ENCODE measurements at regions of chr21 and their contacts with region 1.

Region 1: GRCh38 chr21:37267269-37268184 is at the start of gene VPS26C:
- DNase-seq: peak; percentile 100
- ATAC-seq: peak; percentile 86
- H3K4me3 ChIP-seq: peak within 1 kb of the TSS; percentile 66 to 99 (median 99)
- H3K4me3 Mint-ChIP-seq: peak within 1 kb of the TSS; percentile 96
- H3K27ac ChIP-seq: peak within 1 kb of the TSS; percentile 99
- H3K27ac Mint-ChIP-seq: peak within 1 kb of the TSS; percentile 99
- H3K4me1 ChIP-seq: peaks cover 14% of the 10 kb centered on the region in 2 donors
- H3K4me1 Mint-ChIP-seq: peaks cover 35% of the 10 kb centered on the region
- H3K27me3 ChIP-seq: peaks cover 0 to 3% (median 0%) of the 10 kb centered on the region in 4 experiments
- H3K27me3 Mint-ChIP-seq: no peaks in the 10 kb centered on the region
- CTCF ChIP-seq: no peak
- total RNA-seq, gene VPS26C: 58.6 and 59.6 TPM in 2 replicates

Region 2: GRCh38 chr21:36966066-36966820 is 301.3 kb before region 1 on chr21 and contains the start of gene HLCS:
- CTCF ChIA-PET with region 1: no interaction called
- POLR2A ChIA-PET with region 1: no interaction called
- intact Hi-C with region 1: loop called (anchors 2 kb)
- DNase-seq: peak; percentile 87
- ATAC-seq: peak; percentile 90
- H3K4me3 ChIP-seq: peak within 1 kb of the TSS in 4 of 5 experiments; percentile 43 to 73 (median 69)
- H3K4me3 Mint-ChIP-seq: peak within 1 kb of the TSS; percentile 92
- H3K27ac ChIP-seq: peak within 1 kb of the TSS; percentile 39 to 81
- H3K27ac Mint-ChIP-seq: peak within 1 kb of the TSS; percentile 89
- H3K4me1 ChIP-seq: peaks cover 13 to 16% of the 10 kb centered on the region in 2 donors
- H3K4me1 Mint-ChIP-seq: peaks cover 15% of the 10 kb centered on the region
- H3K27me3 ChIP-seq: no peaks in the 10 kb centered on the region
- H3K27me3 Mint-ChIP-seq: no peaks in the 10 kb centered on the region
- CTCF ChIP-seq: peak; percentile 22
- total RNA-seq, gene HLCS: 14.7 and 16.2 TPM in 2 replicates

Region 3: GRCh38 chr21:37072988-37073416 is 194.5 kb before region 1 on chr21 and contains the starts of genes PIGP and TTC3:
- CTCF ChIA-PET with region 1: no interaction called
- POLR2A ChIA-PET with region 1: no interaction called
- intact Hi-C with region 1: loop called (anchors 1 kb)
- DNase-seq: peak; percentile 98
- ATAC-seq: peak; percentile 67
- H3K4me3 ChIP-seq: peak within 1 kb of the TSS; percentile 80 to 92 (median 86)
- H3K4me3 Mint-ChIP-seq: peak within 1 kb of the TSS; percentile 98
- H3K27ac ChIP-seq: peak within 1 kb of the TSS; percentile 98
- H3K27ac Mint-ChIP-seq: peak within 1 kb of the TSS; percentile 99
- H3K4me1 ChIP-seq: peaks cover 22 to 23% of the 10 kb centered on the region in 2 donors
- H3K4me1 Mint-ChIP-seq: peaks cover 46% of the 10 kb centered on the region
- H3K27me3 ChIP-seq: no peaks in the 10 kb centered on the region
- H3K27me3 Mint-ChIP-seq: no peaks in the 10 kb centered on the region
- CTCF ChIP-seq: no peak
- total RNA-seq, gene PIGP: 21.7 and 22.7 TPM in 2 replicates
- total RNA-seq, gene TTC3: 163 and 191 TPM in 2 replicates

Region 4: DNA sequence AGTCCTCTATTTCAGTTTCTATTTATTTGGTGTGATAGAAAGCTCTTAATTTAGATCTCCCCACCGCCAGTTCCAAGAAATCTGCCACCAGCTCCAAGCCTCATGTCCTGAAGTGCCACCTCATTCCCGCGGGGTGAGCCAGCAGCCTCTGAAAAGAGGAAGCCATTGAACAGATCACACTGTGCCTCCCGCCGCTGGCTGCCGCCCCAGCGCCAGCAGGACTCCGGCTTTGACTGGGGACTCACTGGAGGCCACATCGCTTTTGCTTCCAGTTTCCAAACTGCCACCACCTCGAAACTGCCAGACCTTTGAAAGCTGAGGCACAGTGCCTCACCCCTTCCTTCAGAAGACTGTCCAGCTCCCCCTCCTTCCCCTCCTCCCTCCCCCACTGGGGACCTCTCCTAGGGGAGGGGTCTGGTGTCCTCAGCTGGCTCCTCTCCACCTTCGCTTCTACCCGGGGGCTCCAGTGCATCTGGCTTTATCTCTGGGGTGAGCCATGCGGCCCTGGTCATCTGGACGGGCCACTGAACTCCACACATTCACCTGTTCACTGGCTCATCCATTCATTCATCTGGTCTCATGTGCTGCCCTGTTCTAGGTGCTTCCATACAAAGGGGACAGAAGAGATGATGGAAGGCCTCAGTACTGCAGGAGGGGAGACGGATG is 59.3 kb before region 1 on chr21:
- CTCF ChIA-PET with region 1: no interaction called
- POLR2A ChIA-PET with region 1: interaction called, 3 read pairs
- intact Hi-C with region 1: loop called (anchors 1 kb)
- DNase-seq: peak; percentile 80
- ATAC-seq: peak; percentile 65
- H3K4me3 ChIP-seq: peak overlapping the region in 4 of 5 experiments; percentile 12 to 68 (median 34)
- H3K4me3 Mint-ChIP-seq: peak overlapping the region; percentile 76
- H3K27ac ChIP-seq: peak overlapping the region; percentile 54 to 79
- H3K27ac Mint-ChIP-seq: peak overlapping the region; percentile 78
- H3K4me1 ChIP-seq: peaks cover 27 to 34% of the 10 kb centered on the region in 2 donors
- H3K4me1 Mint-ChIP-seq: peaks cover 40% of the 10 kb centered on the region
- H3K27me3 ChIP-seq: no peaks in the 10 kb centered on the region
- H3K27me3 Mint-ChIP-seq: no peaks in the 10 kb centered on the region
- CTCF ChIP-seq: no peak

Measured in B cell (primary cell).